ENCODE measurements at regions of chr11 and their contacts with region 1.

Region 1: DNA sequence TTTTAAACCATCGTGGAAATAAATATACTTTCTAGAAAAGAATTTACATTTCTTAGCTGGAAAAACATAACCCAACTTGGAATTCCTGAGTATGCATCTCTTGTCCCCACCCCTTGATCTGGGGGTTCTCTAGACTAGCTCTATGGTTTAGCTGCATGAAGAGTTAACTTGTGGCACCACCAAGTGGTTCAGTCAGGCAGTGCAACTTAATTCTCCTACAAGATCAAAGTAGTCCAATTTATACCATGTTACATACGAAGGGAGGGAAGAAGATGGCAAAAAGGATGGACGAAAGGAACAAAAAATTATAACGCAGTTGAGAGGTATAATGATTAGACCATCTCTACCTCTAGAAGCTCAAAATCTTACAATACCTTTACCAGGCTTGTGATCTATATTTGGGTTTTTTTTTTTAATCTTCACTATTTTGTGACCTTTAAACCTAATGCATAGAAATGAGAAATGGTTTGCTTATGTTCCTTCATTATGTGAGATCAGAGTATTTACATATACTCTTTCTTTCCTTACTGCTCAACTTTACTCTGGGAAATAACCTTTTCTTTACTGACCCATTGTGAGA is 28.5 kb upstream of the ALKBH3 start:
- DNase-seq: peak; percentile 67
- CTCF ChIP-seq: peak; percentile 75

Region 2: GRCh38 chr11:43504316-43504950 is 347.7 kb before region 1 on chr11:
- CTCF ChIA-PET with region 1: interaction called, 17 read pairs
- POLR2A ChIA-PET with region 1: no interaction called
- DNase-seq: peak; percentile 51
- CTCF ChIP-seq: peak; percentile 48

Region 3: GRCh38 chr11:43825217-43825816 is 26.8 kb before region 1 on chr11:
- CTCF ChIA-PET with region 1: interaction called, 39 read pairs
- POLR2A ChIA-PET with region 1: no interaction called
- DNase-seq: no peak
- CTCF ChIP-seq: peak; percentile 43

Region 4: DNA sequence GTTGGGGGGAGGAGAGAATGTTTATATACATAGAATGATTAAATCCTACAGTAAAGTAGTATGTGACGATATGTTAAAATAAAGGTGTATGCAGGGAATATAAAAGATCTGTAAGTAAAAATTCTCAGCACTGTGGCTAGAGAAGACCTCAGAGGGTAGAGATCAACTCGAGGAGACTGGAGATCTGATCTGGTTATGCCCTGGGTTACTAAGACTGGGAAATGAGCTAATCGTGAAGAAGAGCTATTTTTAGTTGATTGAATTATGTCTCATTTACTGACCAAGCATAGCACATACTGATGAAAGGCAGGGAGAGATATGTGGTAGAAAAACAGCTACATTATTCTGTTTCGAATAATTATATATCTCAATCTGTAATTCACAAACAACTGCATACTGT is 14.3 kb before region 1 on chr11:
- CTCF ChIA-PET with region 1: interaction called, 39 read pairs
- POLR2A ChIA-PET with region 1: no interaction called
- DNase-seq: no peak
- CTCF ChIP-seq: no peak

Region 5: DNA sequence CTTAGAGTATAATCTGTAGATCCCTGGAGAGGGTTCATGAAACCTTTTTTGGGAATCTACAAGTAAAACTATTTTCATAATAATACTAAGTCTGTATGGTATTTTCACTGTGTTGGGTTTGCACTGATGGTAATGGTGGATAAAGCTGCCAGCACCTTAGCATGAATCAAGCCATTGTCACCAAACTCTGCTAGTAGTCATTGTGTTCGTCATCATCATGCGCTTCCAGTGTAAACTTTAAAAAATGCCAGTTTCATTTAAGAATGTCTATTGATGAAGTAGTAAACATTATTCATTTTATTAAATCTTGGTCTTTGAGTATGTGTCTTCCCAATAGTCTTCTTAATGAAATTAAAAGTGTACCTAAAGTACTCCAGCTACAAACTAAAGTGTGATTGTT is 43.5 kb after region 1 on chr11:
- CTCF ChIA-PET with region 1: interaction called, 11 read pairs
- POLR2A ChIA-PET with region 1: no interaction called
- DNase-seq: no peak
- CTCF ChIP-seq: no peak

Region 6: DNA sequence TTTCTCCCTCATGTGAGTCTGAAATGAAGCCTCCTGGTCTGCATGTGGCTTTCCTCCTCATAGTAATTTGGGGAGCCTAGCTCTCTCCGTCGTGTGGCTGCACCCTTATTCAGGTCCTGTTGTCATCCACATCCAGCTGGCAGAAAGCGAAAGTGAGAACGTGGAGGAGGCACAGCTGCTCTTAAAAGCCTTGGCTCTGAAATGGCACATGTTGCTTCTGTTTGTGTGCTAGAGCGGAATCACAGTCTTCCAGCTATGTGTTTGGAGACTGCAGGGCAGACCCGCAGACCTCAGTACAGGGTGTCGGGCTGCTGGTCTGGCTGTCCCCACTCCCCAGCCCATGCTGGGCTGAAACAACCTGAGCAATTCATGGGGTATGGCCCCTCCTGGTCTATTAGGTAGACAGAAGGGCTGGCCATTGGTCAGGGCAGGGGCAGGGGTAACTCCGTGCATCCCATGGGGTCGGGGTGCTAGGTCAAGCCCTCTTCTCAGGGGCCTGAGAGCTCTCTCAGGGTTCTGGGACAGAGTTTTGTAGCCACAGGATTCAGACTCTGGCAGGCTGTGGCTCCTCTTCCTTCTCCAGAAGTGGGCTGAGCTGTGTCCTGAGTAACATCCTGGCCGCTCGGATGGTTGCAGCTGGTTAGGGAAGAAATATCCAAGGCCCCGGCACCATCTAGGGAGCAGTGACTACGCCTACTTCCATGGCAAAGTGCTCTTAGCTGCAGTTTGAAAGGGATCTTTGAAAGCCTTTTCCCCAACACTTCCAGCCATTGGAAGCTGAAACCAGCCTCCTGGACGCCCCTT is 140.9 kb after region 1 on chr11:
- CTCF ChIA-PET with region 1: no interaction called
- POLR2A ChIA-PET with region 1: no interaction called
- DNase-seq: no peak
- CTCF ChIP-seq: no peak

Region 7: DNA sequence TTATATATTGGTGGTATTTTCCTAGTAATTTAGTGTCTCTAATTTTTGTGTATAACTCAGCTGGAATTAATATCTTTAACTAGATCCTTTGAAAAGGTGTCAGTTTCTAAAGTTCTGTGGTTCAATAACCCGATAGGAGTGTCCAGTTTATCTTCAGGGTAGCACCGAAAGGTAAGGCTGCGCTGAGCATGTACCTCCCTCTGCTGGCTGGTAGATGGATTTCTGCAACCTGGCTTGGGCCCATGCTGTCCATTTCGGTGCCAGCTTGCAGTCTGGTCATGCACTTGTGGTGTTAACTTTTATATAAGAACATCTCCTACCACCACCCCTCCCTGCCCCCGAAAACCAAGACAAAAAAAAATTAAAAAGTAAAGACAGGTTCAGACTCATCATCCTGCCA is 268.0 kb after region 1 on chr11:
- CTCF ChIA-PET with region 1: no interaction called
- POLR2A ChIA-PET with region 1: no interaction called
- DNase-seq: no peak
- CTCF ChIP-seq: no peak

Region 8: GRCh38 chr11:44315947-44316658 is 464.0 kb after region 1 on chr11:
- CTCF ChIA-PET with region 1: no interaction called
- POLR2A ChIA-PET with region 1: no interaction called
- DNase-seq: no peak
- CTCF ChIP-seq: no peak